Left ventricle myocardium superior (tissue), 1 donor: ENCODE measurements at regions of chr22 and their contacts with region 1.

Region 1: DNA sequence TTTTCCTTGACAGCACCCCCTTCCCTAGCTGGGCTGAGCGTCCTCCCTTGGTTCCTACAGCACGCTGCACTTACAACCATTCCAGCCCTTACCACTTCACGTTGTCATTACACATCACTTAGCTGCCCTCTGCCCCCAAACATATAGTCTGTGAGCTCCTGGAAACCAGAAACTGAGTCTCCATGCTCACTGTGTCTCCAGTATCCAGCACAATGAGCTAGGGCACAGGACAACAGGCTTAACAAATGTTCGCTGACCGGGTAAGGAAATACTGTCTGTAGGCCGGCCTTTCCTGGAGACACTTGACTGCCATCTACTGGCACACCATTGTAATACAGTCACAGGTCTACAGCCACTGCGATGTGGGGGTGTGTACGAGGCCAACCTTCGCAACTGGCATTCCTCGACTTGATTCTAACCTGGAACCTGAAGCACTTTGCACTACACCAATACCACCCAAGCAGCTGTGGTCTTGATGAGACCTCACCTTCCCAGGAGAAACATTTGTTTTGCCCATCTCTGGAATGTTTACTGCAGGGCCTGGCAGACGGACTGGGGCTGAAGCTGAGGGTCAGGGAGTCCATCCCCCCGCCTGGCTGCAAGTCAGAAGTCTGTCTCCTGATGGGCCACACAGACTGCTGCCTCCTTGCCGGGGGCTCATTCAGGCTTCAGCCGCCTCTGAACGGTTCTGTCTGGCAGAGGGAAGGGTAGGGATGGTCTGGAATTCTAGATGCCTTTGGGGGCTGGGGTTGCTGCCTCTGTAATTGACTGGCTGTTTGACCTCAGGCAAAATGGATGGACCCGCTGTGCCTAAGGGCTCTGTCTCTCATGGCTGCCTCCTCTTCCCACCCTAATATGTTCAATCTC is 72.0 kb downstream of the SYN3 start:
- DNase-seq: peak; percentile 48
- ATAC-seq: peak; percentile 99

Region 2: GRCh38 chr22:32660292-32660691 is 325.8 kb before region 1 on chr22:
- intact Hi-C with region 1: loop called (anchors 5 kb)
- DNase-seq: peak; percentile 79
- ATAC-seq: peak; percentile 77

Region 3: GRCh38 chr22:32796865-32797573 is 189.1 kb before region 1 on chr22:
- intact Hi-C with region 1: loop called (anchors 10 kb)
- DNase-seq: peak; percentile 80
- ATAC-seq: peak; percentile 55

Region 4: GRCh38 chr22:32926600-32926999 is 59.5 kb before region 1 on chr22:
- intact Hi-C with region 1: loop called (anchors 10 kb)
- DNase-seq: no peak
- ATAC-seq: peak; percentile 57